Endothelial cell of umbilical vein (primary cell): ENCODE measurements at regions of chr11 and their contacts with region 1.

Region 1: GRCh38 chr11:67401495-67402191 is at the start of gene PPP1CA:
- DNase-seq: peak; percentile 85
- H3K4me3 ChIP-seq: peak within 1 kb of the TSS; percentile 79 to 89 (median 89)
- H3K27ac ChIP-seq: peak within 1 kb of the TSS; percentile 81
- H3K4me1 ChIP-seq: peaks cover 18% of the 10 kb centered on the region
- H3K27me3 ChIP-seq: no peaks in the 10 kb centered on the region
- CTCF ChIP-seq: peak in 1 of 2 donors; percentile 26
- POLR2A ChIP-seq: peak; percentile 90
- total RNA-seq, gene PPP1CA: 192 and 202 TPM in 2 replicates

Region 2: DNA sequence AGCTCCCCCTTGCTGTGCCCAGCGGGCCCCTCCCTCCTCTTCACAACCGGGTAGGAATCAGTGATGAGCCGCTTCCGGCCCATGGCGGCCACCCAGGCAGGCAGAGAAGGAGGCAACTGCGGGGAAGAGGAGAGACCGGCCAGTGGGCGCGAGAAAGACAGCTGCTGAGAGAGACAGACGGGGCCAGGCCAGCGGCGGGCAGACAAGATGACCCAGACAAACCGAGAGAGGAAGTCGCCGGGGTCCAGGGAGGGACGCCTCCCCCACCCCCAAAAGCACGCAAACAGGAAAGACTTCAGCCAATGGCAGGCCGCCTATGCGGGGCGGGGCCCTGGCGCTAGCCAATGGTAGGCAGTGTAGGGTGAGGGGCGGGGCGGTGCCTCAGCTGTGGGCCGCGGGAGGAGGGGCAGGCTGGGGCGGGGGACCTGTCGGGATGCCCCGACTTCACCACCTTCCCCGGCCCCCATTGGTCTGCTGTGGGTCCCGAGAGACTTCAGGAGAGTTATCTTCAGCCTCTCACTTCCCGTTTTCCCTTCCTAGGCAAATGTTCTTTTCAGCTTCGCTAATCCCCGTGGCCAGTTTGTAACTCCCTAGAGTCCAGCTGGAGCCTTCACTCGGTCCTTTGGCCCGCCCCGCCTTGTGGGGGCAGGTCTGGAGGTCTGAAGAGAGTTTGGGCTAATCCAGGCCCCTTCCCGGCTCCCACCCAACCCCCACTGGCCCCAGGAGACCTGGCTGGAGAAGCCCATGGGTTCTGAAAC is 48.1 kb before region 1 on chr11 and contains the start of gene POLD4:
- CTCF ChIA-PET with region 1: interaction called, 13 read pairs
- POLR2A ChIA-PET with region 1: no interaction called
- dilution Hi-C with region 1: no loop called
- intact Hi-C with region 1: no loop called
- DNase-seq: peak; percentile 97
- H3K4me3 ChIP-seq: peak within 1 kb of the TSS; percentile 19 to 76 (median 53)
- H3K27ac ChIP-seq: peak within 1 kb of the TSS; percentile 78
- H3K4me1 ChIP-seq: peaks cover 47% of the 10 kb centered on the region
- H3K27me3 ChIP-seq: no peaks in the 10 kb centered on the region
- CTCF ChIP-seq: no peak
- POLR2A ChIP-seq: peak; percentile 95
- total RNA-seq, gene POLD4: 50.1 and 66.9 TPM in 2 replicates

Region 3: DNA sequence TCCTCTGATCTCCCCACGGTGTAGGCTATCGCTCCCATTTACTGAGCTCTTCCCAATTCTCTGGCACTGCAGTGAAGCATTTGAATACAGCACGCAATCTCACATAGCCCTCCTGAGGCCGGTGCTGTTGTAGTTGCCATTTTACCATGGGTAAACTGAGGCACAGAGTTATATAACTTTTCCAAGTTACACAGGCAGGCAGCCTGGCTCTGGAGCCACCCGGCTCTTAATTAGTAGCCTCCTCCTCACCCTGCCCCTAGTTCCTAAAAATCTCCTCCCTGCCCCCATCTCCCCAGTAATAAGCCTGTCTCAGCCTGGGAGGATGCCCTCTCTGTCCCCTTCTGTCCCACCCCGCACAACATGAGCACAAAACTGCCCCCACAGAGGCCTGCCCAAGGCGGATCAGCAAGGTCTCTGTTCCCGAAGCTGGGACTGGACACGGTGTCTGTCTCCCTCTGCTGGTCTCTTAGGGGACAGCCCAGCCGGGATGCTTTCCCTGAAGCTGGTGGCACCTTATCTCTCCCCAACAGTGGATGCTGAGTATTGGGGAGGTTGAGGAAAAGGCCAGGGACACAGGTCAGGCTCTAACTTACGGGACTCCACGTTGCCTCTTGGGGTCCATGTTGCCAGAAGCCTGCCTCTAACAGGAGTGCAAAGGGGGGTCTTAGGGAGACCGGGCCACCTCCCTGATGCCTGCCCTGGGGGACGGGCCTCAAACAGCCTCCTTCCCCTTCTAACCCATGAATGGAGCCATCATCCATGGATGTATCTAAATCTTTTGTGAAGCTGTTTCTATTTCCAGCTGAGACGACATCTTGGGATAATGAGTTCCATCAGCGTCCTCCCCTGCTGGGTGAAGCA is 19.1 kb before region 1 on chr11:
- CTCF ChIA-PET with region 1: interaction called, 30 read pairs
- POLR2A ChIA-PET with region 1: interaction called, 3 read pairs
- dilution Hi-C with region 1: no loop called
- intact Hi-C with region 1: no loop called
- DNase-seq: peak; percentile 72
- H3K4me3 ChIP-seq: no peak overlapping the region
- H3K27ac ChIP-seq: no peak overlapping the region
- H3K4me1 ChIP-seq: no peaks in the 10 kb centered on the region
- H3K27me3 ChIP-seq: no peaks in the 10 kb centered on the region
- CTCF ChIP-seq: peak; percentile 97
- POLR2A ChIP-seq: no peak

Region 4: GRCh38 chr11:67411785-67412152 is 10.1 kb after region 1 on chr11:
- CTCF ChIA-PET with region 1: interaction called, 22 read pairs
- POLR2A ChIA-PET with region 1: no interaction called
- dilution Hi-C with region 1: no loop called
- intact Hi-C with region 1: no loop called
- DNase-seq: no peak
- H3K4me3 ChIP-seq: no peak overlapping the region
- H3K27ac ChIP-seq: no peak overlapping the region
- H3K4me1 ChIP-seq: no peaks in the 10 kb centered on the region
- H3K27me3 ChIP-seq: peaks cover 0 to 13% of the 10 kb centered on the region in 2 experiments
- CTCF ChIP-seq: no peak
- POLR2A ChIP-seq: no peak

Region 5: GRCh38 chr11:67439321-67439883 is 37.8 kb after region 1 on chr11:
- CTCF ChIA-PET with region 1: interaction called, 9 read pairs
- POLR2A ChIA-PET with region 1: no interaction called
- dilution Hi-C with region 1: no loop called
- intact Hi-C with region 1: loop called (anchors 2 kb)
- DNase-seq: peak; percentile 8
- H3K4me3 ChIP-seq: no peak overlapping the region
- H3K27ac ChIP-seq: no peak overlapping the region
- H3K4me1 ChIP-seq: peaks cover 6% of the 10 kb centered on the region
- H3K27me3 ChIP-seq: no peaks in the 10 kb centered on the region
- CTCF ChIP-seq: peak in 1 of 2 donors; percentile 13
- POLR2A ChIP-seq: peak; percentile 13

Region 6: DNA sequence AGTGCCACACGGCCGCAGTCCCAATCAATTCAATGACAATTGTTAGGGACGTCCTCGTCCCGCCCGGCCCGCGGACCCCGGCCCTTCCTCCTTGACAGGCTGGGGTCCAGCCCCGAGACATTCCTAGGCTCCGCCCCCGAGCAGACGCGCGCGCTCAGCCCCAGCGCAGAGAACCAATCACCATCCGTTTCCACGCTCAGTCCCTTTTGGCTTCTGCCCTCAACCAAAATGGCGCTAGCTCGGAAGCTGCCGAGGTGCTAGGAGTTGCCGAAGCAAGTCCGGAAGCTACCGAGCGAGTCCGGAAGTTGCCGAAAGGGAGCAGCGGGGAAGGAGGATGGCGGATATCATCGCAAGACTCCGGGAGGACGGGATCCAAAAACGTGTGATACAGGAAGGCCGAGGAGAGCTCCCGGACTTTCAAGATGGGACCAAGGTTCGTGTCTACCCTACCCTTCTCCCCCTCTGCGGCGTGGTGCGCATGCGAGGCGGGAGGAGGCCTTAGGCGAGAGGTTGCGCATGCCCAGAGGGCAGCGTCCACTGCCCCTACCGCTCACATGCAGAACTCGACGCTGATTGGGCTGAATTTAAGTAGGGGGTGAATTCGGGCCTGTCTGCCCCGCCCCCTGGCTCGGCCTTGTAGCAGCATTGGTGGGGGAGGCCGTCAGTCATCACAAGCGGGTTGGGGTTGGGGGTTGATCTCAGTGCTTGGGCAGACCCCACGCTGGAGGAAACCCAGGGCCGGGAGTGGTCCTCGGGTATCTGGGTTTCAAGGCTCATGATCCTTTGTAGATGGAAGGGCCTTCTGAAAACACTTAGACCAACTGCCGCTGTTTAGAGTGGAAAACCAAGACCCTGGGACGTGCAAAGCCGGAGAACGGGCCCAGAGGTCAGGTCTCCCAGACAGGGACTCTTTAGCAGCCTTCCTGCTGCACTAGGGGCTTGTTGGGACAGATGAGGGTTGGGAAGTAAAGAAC is 81.5 kb after region 1 on chr11 and contains the start of gene AIP:
- CTCF ChIA-PET with region 1: interaction called, 11 read pairs
- POLR2A ChIA-PET with region 1: interaction called, 3 read pairs
- dilution Hi-C with region 1: no loop called
- intact Hi-C with region 1: no loop called
- DNase-seq: peak; percentile 98
- H3K4me3 ChIP-seq: peak within 1 kb of the TSS; percentile 29 to 72 (median 46)
- H3K27ac ChIP-seq: peak within 1 kb of the TSS; percentile 40
- H3K4me1 ChIP-seq: no peaks in the 10 kb centered on the region
- H3K27me3 ChIP-seq: no peaks in the 10 kb centered on the region
- CTCF ChIP-seq: peak in 1 of 2 donors; percentile 7
- POLR2A ChIP-seq: peak; percentile 73
- total RNA-seq, gene AIP: 46.3 and 46.5 TPM in 2 replicates